Activated CD4-positive, alpha-beta T cell treated with anti-CD3 and anti-CD28 coated beads for 36 hours (primary cell): ENCODE measurements at regions of chr14 and their contacts with region 1.

Region 1: DNA sequence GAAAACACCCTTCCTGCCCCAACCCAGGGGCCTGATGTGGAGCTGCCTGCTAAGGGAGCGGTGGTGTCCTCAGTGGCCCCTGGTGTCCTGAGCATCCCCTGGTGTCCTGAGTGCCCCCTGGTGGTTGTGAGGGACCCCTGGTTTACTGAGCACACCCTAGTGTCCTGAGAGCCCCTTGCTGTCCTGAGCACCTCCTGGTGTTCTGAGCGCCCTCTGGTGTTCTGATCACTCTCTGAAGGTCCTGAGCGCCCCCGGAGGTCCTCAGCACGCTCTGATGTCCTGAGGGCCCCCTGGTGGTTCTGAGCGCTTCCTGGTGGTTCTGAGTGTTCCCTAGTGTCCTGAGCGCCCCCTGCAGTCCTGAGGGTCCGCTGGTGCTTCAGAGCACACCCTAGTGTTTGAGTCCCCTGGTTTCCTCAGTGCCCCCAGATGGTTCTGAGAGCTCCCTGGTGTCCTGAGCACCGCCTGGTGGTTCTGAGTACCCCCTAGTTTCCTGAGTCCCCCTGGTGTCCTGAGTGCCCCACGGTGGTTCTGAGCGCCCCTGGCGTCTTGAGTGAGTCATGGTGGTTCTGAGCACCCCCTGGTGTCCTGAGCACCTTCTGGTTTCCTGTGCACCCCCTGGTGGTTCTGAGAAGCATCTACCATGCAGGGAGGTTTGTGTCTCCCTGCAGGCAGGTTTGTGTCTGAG is 1004.2 kb downstream of the TMEM121 start:
- DNase-seq: peak; percentile 64
- ATAC-seq: peak; percentile 87
- H3K4me3 Mint-ChIP-seq: no peak overlapping the region
- H3K27ac Mint-ChIP-seq: no peak overlapping the region
- H3K4me1 Mint-ChIP-seq: no peaks in the 10 kb centered on the region
- H3K27me3 Mint-ChIP-seq: peaks cover 10% of the 10 kb centered on the region

Region 2: GRCh38 chr14:106455026-106455425 is 75.5 kb before region 1 on chr14:
- CTCF ChIA-PET with region 1: interaction called, 15 read pairs
- POLR2A ChIA-PET with region 1: no interaction called
- intact Hi-C with region 1: loop called in 1 of 2 experiments (anchors 5 kb)
- DNase-seq: no peak
- ATAC-seq: no peak
- H3K4me3 Mint-ChIP-seq: no peak overlapping the region
- H3K27ac Mint-ChIP-seq: no peak overlapping the region
- H3K4me1 Mint-ChIP-seq: no peaks in the 10 kb centered on the region
- H3K27me3 Mint-ChIP-seq: no peaks in the 10 kb centered on the region

Region 3: GRCh38 chr14:106491851-106492250 is 38.7 kb before region 1 on chr14:
- CTCF ChIA-PET with region 1: interaction called, 27 read pairs
- POLR2A ChIA-PET with region 1: no interaction called
- intact Hi-C with region 1: no loop called
- DNase-seq: peak; percentile 63
- ATAC-seq: no peak
- H3K4me3 Mint-ChIP-seq: no peak overlapping the region
- H3K27ac Mint-ChIP-seq: no peak overlapping the region
- H3K4me1 Mint-ChIP-seq: peaks cover 32% of the 10 kb centered on the region
- H3K27me3 Mint-ChIP-seq: no peaks in the 10 kb centered on the region

Region 4: GRCh38 chr14:106518054-106518943 is 12.3 kb before region 1 on chr14:
- CTCF ChIA-PET with region 1: interaction called, 61 read pairs
- POLR2A ChIA-PET with region 1: no interaction called
- intact Hi-C with region 1: no loop called
- DNase-seq: peak; percentile 92
- ATAC-seq: peak; percentile 84
- H3K4me3 Mint-ChIP-seq: no peak overlapping the region
- H3K27ac Mint-ChIP-seq: no peak overlapping the region
- H3K4me1 Mint-ChIP-seq: peaks cover 13% of the 10 kb centered on the region
- H3K27me3 Mint-ChIP-seq: no peaks in the 10 kb centered on the region

Region 5: GRCh38 chr14:106564058-106564656 is 33.6 kb after region 1 on chr14:
- CTCF ChIA-PET with region 1: interaction called, 22 read pairs
- POLR2A ChIA-PET with region 1: no interaction called
- intact Hi-C with region 1: no loop called
- DNase-seq: peak; percentile 86
- ATAC-seq: peak; percentile 76
- H3K4me3 Mint-ChIP-seq: no peak overlapping the region
- H3K27ac Mint-ChIP-seq: no peak overlapping the region
- H3K4me1 Mint-ChIP-seq: no peaks in the 10 kb centered on the region
- H3K27me3 Mint-ChIP-seq: peaks cover 10% of the 10 kb centered on the region